ENCODE measurements at regions of chr19 and their contacts with region 1.

Region 1: DNA sequence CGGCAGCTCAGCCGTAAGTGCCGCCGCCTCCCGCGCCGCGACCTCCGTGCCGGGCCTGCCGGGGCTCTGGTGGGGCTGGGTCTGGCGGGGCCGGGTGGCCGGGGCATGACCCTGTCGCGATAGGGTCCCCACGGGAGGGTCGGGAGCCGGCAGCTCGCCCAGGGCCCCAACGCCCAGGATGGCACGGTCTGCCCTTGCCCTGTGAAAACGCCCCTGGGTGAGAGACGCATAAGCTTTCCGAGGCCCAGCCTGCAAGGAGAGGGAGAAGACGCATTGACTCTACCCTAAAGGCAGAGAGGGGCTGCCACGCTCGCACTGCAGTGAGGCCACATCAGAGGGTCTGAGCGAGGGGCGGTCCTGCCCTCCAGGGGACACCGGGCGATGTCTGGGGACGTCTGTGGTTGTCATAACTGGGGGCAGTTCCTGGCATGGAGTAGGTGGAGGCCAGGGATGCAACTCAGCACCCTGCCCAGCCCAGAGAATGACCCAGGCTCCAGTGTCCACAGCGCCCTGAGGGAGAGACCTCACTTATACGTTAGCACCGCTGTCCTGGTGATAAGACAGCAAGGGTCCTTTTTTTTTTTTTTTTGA is 539 bp downstream of the ZNF554 start:
- DNase-seq: no peak
- ATAC-seq: peak; percentile 43
- H3K4me3 Mint-ChIP-seq: peak overlapping the region; percentile 91
- H3K27ac Mint-ChIP-seq: 0 out of 2 replicates have a peak overlapping the region, but pooled peaks have one; percentile 49
- H3K4me1 Mint-ChIP-seq: no peaks in the 10 kb centered on the region
- H3K27me3 Mint-ChIP-seq: no peaks in the 10 kb centered on the region
- CTCF ChIP-seq: no peak

Region 2: DNA sequence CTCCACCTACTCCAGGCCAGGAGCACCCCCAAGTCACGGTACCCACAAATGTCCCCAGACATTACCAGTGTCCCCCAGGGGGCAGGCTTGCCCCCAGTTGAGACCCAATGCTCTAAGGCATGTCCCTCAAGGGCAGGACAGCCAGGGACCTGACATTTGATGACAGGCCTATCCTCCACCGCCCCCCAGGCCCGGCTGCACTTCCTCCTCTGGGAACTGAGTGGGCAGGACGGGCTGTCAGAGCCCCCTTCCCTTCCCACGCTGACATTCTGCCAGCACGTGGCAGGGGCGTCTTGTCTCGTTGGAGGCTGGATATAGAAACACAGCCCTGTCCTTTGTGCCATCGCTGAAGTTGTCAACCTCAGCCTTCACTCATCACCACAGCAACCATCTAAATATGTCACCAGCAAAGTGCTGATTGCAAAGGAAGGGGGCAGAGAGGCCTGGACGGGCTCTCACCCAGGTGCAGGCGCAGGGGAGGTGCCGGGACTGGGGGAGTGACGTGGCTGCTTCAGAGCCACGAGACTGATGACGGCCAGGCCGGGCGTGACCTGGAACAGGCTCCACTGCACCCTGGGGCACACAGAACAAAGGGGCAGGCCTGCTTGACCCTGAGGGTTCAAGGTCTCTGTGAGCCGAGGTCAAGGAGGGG is 156.2 kb before region 1 on chr19:
- CTCF ChIA-PET with region 1: no interaction called
- POLR2A ChIA-PET with region 1: no interaction called
- DNase-seq: no peak
- ATAC-seq: no peak
- H3K4me3 Mint-ChIP-seq: no peak overlapping the region
- H3K27ac Mint-ChIP-seq: no peak overlapping the region
- H3K4me1 Mint-ChIP-seq: 0 out of 2 replicates have a peak, but pooled peaks cover 3% of the 10 kb centered on the region
- H3K27me3 Mint-ChIP-seq: peaks cover 3% of the 10 kb centered on the region
- CTCF ChIP-seq: no peak

Region 3: DNA sequence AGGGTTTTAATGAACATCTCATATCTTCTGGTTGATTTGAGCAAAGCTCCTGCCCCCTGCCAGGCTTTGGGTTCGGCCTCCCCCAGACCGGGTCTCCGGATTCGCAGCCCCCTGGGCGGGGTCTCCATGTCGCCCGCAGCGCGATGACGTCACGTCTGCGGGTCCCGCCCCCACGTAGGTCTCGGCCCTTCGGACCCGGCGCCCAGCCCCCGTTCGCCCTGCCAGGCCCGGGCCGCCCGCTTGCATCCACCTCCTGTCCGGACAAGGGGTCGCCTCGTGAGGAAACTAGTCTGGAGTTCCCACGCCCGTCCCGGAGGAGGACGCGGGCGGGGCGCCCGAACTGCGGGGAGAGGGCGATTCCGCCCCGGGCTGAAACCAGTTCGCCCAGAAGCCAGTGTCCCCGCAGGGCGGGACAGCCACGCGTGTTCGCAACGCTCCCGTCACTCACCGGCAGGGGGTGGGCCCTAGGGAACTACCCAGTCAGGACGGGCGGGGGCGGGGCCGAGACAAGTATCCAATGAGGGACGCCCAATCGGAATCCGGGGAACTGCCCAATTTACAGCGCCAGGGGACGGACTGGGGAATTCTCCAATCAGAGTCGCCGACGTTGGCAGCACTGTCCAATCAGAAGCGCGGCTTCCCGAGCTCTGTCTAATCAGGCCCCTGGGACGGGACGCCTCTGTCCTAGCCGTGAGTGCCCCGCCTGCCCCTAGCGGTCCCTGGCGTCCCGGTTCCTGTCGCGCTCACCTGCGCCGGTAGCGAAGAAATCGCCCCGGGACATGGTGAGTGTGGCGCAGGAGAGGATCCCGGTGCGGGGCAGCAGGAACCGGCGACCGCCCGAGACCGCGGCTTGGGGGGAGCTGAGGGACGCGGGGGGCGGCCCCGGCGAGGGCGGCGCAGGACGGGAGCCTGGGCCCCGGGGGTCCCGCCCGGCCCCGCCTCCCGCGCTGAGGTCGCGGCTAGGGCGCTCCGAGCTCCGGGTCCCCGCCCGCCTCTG is 20.9 kb after region 1 on chr19 and contains the start of gene ZNF555:
- CTCF ChIA-PET with region 1: interaction called, 14 read pairs
- POLR2A ChIA-PET with region 1: no interaction called
- DNase-seq: peak; percentile 98
- ATAC-seq: peak; percentile 98
- H3K4me3 Mint-ChIP-seq: peak within 1 kb of the TSS; percentile 79
- H3K27ac Mint-ChIP-seq: no peak within 1 kb of the TSS
- H3K4me1 Mint-ChIP-seq: peaks cover 5% of the 10 kb centered on the region
- H3K27me3 Mint-ChIP-seq: peaks cover 8% of the 10 kb centered on the region
- CTCF ChIP-seq: no peak; the same call in 1 of the 2 replicates
- total RNA-seq, gene ZNF555: 6.6 to 7.2 TPM (median 6.6 TPM) in 3 replicates

Region 4: GRCh38 chr19:2887391-2887914 is 67.2 kb after region 1 on chr19:
- CTCF ChIA-PET with region 1: interaction called, 11 read pairs
- POLR2A ChIA-PET with region 1: no interaction called
- DNase-seq: no peak
- ATAC-seq: peak; percentile 95
- H3K4me3 Mint-ChIP-seq: no peak overlapping the region
- H3K27ac Mint-ChIP-seq: peak overlapping the region; percentile 28
- H3K4me1 Mint-ChIP-seq: peaks cover 8% of the 10 kb centered on the region
- H3K27me3 Mint-ChIP-seq: no peaks in the 10 kb centered on the region; the same call in 1 of the 2 replicates
- CTCF ChIP-seq: peak; percentile 25